ENCODE measurements at regions of chr13 and their contacts with region 1.

Region 1: DNA sequence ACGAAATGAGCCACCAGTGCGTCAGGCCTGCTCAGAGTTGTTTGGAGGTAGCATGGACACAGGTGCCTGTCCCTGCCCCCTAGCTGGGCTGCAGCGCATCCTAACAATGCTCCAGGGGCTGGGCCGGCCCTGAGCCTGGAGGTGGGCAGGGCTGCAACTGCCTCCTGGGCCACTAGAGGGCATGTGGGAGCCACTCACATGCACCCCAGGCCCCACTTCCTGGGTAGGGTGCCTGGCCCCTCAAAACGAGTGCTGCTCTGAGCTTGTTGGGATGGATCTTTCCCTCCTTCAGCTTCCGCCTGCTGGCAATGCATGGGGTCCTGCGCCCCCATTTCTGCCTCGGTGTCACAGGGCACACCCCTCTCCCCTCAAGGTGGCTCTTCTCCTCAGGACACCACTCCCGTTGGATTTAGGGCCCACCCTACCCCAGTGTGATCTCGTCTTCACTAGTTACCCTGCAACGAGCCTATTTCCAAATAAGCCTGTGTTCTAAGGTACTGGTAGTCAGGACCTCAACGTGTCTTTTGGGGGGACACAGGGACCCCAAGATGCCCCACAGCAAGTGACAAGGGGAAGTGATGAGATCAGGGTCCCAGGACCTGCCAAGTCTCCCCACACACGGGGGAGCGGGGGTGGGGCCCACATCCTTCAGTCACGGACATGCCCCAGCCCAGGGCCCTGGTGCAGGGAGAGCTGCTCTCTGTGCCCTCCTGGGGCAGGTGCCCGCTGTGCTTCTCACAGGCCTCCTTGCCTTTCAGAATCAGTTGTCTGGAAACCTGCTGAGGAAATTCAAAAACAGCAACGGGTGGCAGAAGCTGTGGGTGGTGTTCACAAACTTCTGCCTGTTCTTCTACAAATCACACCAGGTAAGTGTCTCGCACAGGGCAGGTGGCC is 131.3 kb downstream of the STK24 start:
- DNase-seq: peak; percentile 90
- ATAC-seq: peak; percentile 88
- H3K4me3 Mint-ChIP-seq: no peak overlapping the region
- H3K27ac Mint-ChIP-seq: peak overlapping the region; percentile 70; the same call in 1 of the 2 replicates
- H3K4me1 Mint-ChIP-seq: peaks cover 21% of the 10 kb centered on the region
- H3K27me3 Mint-ChIP-seq: no peaks in the 10 kb centered on the region
- CTCF ChIP-seq: peak; percentile 97

Region 2: DNA sequence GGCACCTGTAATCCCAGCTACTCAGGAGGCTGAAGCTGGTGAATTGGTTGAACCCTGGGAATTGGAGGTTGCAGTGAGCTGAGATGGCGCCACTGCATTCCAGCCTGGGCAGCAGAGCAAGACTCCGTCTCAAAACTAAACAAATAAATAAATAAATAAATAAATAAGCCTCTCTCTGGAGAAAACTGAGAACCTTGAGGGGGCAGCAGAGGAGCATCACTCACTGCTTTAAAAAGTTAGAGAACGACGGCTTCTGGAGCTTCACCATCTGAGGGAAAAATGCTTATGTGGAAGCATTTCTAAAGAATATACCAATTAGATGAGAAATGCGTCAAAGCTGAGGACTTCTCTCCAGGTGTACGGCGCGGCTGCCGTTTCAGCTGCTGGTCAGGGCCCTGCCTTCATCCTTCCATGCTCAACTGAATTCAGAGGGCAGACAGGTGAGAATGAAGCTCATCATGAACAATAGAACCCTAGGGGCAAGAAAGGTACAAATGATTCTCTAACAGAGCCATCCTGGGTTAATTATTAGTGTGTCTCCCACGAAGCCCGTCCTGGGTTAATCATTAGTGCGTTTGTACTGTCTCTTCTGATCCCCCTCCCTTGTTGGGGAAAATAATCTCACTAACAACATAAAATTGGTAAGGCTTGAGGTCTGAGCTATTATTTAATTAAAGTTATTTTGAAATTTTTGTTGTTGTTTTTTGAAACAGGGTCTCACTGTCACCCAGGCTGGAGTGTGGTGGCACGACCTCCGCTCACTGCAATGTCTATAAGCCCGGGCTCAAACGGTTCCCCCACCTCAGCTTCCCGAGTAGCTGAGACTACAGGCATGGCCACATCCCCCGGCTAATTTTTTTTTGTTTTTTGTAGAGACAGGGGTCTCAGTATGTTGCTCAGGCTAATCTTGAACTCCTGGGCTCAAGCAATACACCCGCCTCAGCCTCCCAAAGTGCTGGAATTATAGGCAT is 412.0 kb before region 1 on chr13:
- CTCF ChIA-PET with region 1: interaction called, 30 read pairs
- POLR2A ChIA-PET with region 1: no interaction called
- DNase-seq: peak; percentile 20
- ATAC-seq: peak; percentile 44
- H3K4me3 Mint-ChIP-seq: no peak overlapping the region
- H3K27ac Mint-ChIP-seq: no peak overlapping the region
- H3K4me1 Mint-ChIP-seq: peaks cover 3% of the 10 kb centered on the region; the same call in 1 of the 2 replicates
- H3K27me3 Mint-ChIP-seq: no peaks in the 10 kb centered on the region
- CTCF ChIP-seq: no peak

Region 3: GRCh38 chr13:98461525-98462234 is 16.1 kb after region 1 on chr13:
- CTCF ChIA-PET with region 1: interaction called, 30 read pairs
- POLR2A ChIA-PET with region 1: no interaction called
- DNase-seq: no peak
- ATAC-seq: no peak
- H3K4me3 Mint-ChIP-seq: no peak overlapping the region
- H3K27ac Mint-ChIP-seq: no peak overlapping the region; the same call in 1 of the 2 replicates
- H3K4me1 Mint-ChIP-seq: peaks cover 16% of the 10 kb centered on the region
- H3K27me3 Mint-ChIP-seq: no peaks in the 10 kb centered on the region
- CTCF ChIP-seq: no peak

Region 4: DNA sequence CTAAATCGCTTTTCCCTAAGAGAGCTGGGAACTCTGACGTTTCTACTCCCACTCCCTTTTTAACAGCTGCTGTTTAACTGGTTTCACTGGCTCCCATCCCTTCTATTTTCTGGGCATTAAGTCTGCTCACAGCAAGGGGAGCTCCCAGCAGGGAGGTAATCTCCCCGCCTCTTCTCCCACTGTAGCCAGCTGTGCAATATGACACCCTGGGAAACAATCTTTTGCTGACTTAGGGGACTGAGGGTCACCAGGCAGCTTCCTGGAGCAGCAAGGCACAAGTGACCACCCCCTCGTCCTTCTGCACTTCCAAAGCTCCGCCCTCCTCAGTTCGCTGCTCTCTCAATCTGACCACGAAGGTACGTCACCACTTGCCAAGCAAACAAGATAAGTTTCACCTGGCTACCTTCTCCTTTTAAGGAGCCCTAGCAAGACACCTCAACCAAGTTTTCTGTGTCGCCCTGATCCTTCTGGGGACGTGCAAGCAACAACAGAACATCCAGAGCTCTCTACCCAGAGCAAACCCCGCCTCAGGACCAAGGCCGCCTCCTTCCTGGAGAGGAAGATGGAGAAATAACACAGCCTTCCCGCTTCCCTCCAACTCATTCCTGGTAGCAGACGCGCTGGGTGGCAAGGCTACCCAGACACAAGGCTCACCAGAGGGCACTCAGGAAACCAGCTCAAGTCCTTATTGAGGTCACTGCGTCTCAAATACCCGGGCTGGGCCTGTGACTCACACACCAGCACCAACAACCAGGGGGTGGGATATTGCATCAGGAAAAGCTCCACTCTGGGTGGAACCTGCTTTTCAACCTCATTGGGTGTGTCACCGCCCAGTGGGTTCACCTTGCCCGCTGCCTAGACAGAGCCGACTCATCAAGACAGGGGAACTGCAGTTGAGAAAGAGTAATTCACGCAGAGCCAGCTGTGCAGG is 39.0 kb after region 1 on chr13:
- CTCF ChIA-PET with region 1: interaction called, 29 read pairs
- POLR2A ChIA-PET with region 1: interaction called, 3 read pairs
- DNase-seq: peak; percentile 71
- ATAC-seq: peak; percentile 80
- H3K4me3 Mint-ChIP-seq: peak overlapping the region; percentile 50
- H3K27ac Mint-ChIP-seq: peak overlapping the region; percentile 93
- H3K4me1 Mint-ChIP-seq: peaks cover 89% of the 10 kb centered on the region
- H3K27me3 Mint-ChIP-seq: no peaks in the 10 kb centered on the region
- CTCF ChIP-seq: no peak

Region 5: GRCh38 chr13:98653463-98653985 is 207.9 kb after region 1 on chr13:
- CTCF ChIA-PET with region 1: interaction called, 67 read pairs
- POLR2A ChIA-PET with region 1: no interaction called
- DNase-seq: peak; percentile 88
- ATAC-seq: peak; percentile 97
- H3K4me3 Mint-ChIP-seq: no peak overlapping the region
- H3K27ac Mint-ChIP-seq: peak overlapping the region; percentile 58; the same call in 1 of the 2 replicates
- H3K4me1 Mint-ChIP-seq: peaks cover 8% of the 10 kb centered on the region; the same call in 1 of the 2 replicates
- H3K27me3 Mint-ChIP-seq: no peaks in the 10 kb centered on the region; the same call in 1 of the 2 replicates
- CTCF ChIP-seq: peak; percentile 66